PC-9 (cell line): ENCODE measurements at regions of chr9 and their contacts with region 1.

Region 1: DNA sequence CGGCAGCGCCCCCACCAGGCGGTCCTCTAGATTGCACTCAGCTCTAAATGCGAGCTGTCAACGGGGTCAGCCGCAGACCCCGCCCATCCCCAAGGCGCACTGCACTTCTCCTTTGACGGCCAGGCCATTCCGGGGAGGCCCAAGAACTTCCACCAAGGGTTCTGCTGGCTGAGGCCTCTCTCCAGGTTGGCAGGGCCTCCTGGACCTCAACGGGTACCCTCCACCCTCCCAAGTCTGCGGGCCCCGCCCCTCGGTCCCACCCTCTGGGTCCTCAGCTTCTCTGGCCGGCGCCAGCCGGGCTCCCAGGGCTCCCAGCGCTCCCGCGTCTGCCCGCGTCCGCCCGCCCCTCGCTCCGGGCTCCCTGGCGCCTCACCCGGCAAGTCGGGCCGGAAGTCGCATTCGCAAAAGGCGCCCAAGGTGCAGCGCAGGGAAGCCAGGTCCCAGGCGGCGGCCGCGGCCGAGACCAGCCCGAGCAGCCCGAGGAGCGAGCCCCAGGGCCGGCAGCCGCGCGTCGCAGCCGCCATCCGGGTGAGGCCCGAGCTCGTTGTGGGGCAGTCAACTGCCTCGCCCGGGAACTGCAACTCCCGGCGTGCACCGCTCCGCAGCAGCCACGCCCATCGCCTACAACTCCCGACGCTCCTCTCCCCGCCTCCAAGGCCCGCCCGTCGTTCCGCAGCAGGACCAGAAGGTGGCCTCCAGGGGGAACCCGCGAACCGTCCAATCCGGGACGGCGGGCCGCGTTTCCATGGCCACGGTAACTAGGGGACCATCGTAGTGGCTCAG is at the start of gene TOR2A:
- DNase-seq: peak; percentile 89 to 99
- H3K4me3 ChIP-seq: peak within 1 kb of the TSS; percentile 61
- H3K27ac ChIP-seq: no peak within 1 kb of the TSS
- H3K4me1 ChIP-seq: peaks cover 7% of the 10 kb centered on the region
- H3K27me3 ChIP-seq: no peaks in the 10 kb centered on the region
- CTCF ChIP-seq: peak; percentile 96
- total RNA-seq, gene TOR2A: 16.4 and 19.7 TPM in 2 replicates

Region 2: DNA sequence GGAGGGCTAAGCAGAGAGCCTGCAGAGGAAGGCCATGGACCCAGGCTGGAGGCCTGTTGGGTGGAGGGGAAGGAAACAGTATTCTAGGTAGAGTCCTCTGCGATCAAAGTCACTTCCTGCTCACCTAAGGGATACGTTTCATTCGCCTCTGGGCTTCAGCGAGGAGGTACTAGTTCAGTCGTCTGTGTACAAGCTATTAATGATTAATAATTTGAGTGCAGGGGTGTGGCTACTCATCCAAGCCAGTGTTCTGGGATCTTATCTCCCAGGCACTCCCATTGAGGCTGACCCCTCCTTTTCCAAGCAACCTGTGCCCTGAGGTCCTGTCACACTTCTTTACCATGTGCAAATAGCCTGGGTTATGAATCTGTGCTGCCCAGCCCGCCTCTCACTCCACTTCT is 795.1 kb before region 1 on chr9:
- CTCF ChIA-PET with region 1: no interaction called
- POLR2A ChIA-PET with region 1: no interaction called
- intact Hi-C with region 1: loop called (anchors 5 kb)
- DNase-seq: no peak
- H3K4me3 ChIP-seq: no peak overlapping the region
- H3K27ac ChIP-seq: no peak overlapping the region
- H3K4me1 ChIP-seq: no peaks in the 10 kb centered on the region
- H3K27me3 ChIP-seq: no peaks in the 10 kb centered on the region
- CTCF ChIP-seq: no peak

Region 3: GRCh38 chr9:127586537-127586936 is 148.4 kb before region 1 on chr9:
- CTCF ChIA-PET with region 1: interaction called, 22 read pairs
- POLR2A ChIA-PET with region 1: interaction called, 5 read pairs
- intact Hi-C with region 1: loop called (anchors 1 kb)
- DNase-seq: peak in 1 of 2 experiments; percentile 82
- H3K4me3 ChIP-seq: no peak overlapping the region
- H3K27ac ChIP-seq: no peak overlapping the region
- H3K4me1 ChIP-seq: peaks cover 23% of the 10 kb centered on the region
- H3K27me3 ChIP-seq: no peaks in the 10 kb centered on the region
- CTCF ChIP-seq: peak; percentile 93

Region 4: GRCh38 chr9:127754099-127755050 is 19.4 kb after region 1 on chr9:
- CTCF ChIA-PET with region 1: no interaction called
- POLR2A ChIA-PET with region 1: no interaction called
- intact Hi-C with region 1: no loop called
- DNase-seq: no peak
- H3K4me3 ChIP-seq: no peak overlapping the region
- H3K27ac ChIP-seq: no peak overlapping the region
- H3K4me1 ChIP-seq: no peaks in the 10 kb centered on the region
- H3K27me3 ChIP-seq: peaks cover 49% of the 10 kb centered on the region
- CTCF ChIP-seq: no peak

Region 5: DNA sequence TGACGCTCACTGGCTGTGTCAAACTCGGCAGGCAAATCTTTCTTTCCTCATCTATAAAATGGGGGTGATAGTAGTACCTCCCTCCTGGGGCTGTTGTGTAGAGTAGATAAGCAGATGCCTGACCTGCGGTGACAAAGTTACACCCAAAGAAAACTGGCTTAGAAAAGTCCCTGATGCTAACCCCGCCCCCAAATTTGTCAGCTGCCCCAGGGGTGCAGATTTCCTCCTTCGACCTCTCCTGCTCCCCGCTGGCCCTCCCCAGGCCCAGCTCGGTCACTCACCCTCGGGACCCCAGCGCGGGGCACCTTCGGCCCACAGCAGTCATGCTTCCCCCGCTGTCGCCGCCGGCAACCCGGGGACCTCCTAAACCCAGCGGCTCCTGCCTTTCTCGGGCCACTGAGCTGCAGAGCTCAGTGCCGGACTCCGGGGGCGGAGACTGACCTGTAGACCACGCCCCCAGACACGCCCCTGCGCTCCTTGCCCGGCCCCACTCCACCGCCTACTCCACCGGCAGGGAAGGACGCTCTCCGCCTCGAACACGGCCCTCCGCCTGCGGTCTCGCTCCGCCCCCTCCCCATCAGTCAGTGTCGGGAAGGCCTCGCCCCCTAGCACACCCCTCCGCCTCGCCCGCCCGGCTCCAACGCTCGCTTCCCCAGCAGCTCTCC is 36.1 kb after region 1 on chr9:
- CTCF ChIA-PET with region 1: interaction called, 23 read pairs
- POLR2A ChIA-PET with region 1: interaction called, 6 read pairs
- intact Hi-C with region 1: loop called (anchors 1 kb)
- DNase-seq: peak; percentile 94 to 100
- H3K4me3 ChIP-seq: peak overlapping the region; percentile 72
- H3K27ac ChIP-seq: no peak overlapping the region
- H3K4me1 ChIP-seq: peaks cover 7% of the 10 kb centered on the region
- H3K27me3 ChIP-seq: peaks cover 8% of the 10 kb centered on the region; the same call in 1 of the 2 replicates
- CTCF ChIP-seq: no peak

Region 6: DNA sequence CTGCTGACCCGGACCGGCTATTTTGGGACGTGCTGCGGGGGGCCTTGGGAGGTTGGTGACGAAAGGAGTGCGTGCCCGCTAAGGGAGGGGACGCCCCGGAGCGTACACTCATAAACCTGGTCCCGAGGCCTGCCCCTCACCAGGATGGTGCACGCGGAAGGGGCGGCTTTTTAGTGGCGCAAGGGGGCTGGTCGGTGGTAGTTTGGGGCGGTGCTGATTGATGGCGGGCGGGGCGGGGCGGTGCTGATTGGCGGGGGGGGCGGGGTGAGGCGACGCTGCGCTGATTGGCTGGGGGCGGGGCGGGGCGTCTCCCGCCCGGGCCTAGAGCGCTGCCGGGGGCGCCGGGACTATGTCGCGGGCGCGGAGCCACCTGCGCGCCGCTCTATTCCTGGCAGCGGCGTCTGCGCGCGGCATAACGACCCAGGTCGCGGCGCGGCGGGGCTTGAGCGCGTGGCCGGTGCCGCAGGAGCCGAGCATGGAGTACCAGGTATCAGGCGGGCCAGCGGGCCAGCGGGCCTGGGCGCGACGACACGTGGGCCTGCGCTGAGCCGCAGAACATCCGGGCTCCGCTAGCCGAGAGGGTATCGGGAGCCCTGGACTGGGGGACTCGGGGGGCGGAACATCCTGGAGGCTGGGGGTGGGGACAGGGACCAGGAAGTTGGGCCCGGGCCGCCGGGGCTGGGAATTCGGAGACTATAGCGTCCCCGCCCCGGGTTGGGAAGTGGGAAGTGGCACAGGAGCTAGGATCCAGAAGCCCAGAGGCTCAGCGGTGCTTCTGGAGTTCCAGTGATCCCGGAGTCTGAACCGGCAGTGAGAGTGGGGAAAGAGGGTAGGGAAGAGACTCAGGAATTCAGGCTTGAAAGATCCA is 67.9 kb after region 1 on chr9 and contains the start of gene FPGS:
- CTCF ChIA-PET with region 1: interaction called, 14 read pairs
- POLR2A ChIA-PET with region 1: interaction called, 5 read pairs
- intact Hi-C with region 1: loop called (anchors 5 kb)
- DNase-seq: peak; percentile 66 to 90
- H3K4me3 ChIP-seq: peak within 1 kb of the TSS; percentile 86
- H3K27ac ChIP-seq: peak within 1 kb of the TSS; percentile 96
- H3K4me1 ChIP-seq: peaks cover 48% of the 10 kb centered on the region
- H3K27me3 ChIP-seq: no peaks in the 10 kb centered on the region
- CTCF ChIP-seq: no peak
- total RNA-seq, gene FPGS: 152 and 191 TPM in 2 replicates

Region 7: DNA sequence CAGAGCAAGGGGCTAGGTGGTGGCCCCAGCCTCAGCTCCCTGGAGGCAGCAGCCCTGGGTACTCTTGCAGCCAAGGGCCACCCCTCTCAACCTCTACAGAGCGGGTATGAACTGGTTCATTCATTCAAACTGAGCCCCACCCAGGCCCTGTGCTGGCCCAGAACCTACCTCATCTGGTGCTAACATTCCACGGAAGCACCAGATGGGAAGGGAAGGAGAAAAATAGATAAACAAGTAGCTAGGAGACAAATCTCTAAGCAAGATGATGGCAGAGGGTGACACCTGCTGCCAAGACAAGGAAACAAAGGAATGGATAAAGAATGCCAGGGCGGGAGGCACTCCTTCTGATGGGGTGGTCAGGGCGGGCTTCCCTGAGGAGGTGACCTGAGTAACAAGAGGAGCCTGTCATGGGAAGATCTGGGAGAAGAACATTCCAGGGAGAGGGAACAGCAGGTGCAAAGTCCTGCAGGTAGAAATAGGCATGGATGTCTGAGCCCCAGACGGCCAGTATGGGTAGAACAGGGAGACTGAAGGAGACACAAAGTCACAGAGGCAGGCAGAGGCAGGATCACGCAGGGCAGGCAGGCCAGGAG is 175.8 kb after region 1 on chr9:
- CTCF ChIA-PET with region 1: interaction called, 10 read pairs
- POLR2A ChIA-PET with region 1: no interaction called
- intact Hi-C with region 1: loop called (anchors 1 kb)
- DNase-seq: no peak
- H3K4me3 ChIP-seq: no peak overlapping the region
- H3K27ac ChIP-seq: no peak overlapping the region
- H3K4me1 ChIP-seq: peaks cover 12% of the 10 kb centered on the region
- H3K27me3 ChIP-seq: no peaks in the 10 kb centered on the region
- CTCF ChIP-seq: no peak; the same call in 1 of the 2 replicates

Region 8: DNA sequence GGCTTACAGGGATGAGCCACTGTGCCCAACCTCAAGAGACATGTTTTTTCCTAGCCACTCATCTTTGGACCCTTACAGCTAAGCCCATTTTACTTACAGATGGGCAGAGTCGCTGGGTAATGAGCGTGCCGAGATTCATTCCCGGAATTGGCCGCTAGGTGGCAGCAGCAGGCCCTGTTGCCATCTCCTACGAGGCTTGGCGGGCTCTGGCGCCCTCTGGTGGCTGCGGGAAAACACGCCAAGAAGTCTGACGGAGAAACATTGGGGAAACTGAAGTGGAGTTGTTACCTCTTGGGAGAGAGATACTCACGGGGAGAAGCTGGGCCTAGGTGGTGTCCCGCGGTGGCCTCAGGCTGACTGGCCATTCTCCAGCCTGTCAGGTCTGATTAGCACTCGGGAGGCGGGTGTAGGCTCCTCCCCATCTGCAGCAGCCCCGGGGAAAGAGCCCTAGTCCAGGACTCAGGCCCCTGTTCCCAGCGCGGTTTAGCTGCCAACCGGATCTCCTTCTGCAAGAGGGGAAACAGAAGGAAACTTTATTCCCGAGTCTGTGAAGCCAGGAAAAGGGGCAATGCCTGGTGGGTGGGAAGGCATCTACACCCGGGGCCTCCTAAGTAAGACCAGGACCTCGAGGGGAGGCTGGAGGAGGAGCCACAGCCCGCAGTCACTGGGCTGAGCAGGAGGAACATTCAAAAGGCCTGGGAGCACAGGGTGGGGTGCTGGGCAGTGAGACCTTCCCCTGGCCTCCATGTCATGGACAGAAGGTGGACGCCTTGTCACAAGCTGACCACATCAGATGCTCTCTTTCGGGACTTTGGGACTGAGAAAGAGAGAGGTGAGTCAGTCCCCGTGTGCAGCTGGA is 382.9 kb after region 1 on chr9:
- CTCF ChIA-PET with region 1: no interaction called
- POLR2A ChIA-PET with region 1: no interaction called
- intact Hi-C with region 1: loop called (anchors 2 kb)
- DNase-seq: peak; percentile 75 to 93
- H3K4me3 ChIP-seq: no peak overlapping the region
- H3K27ac ChIP-seq: no peak overlapping the region
- H3K4me1 ChIP-seq: no peaks in the 10 kb centered on the region
- H3K27me3 ChIP-seq: no peaks in the 10 kb centered on the region
- CTCF ChIP-seq: peak; percentile 100